ENCODE measurements at regions of chr2 and their contacts with region 1.

Region 1: DNA sequence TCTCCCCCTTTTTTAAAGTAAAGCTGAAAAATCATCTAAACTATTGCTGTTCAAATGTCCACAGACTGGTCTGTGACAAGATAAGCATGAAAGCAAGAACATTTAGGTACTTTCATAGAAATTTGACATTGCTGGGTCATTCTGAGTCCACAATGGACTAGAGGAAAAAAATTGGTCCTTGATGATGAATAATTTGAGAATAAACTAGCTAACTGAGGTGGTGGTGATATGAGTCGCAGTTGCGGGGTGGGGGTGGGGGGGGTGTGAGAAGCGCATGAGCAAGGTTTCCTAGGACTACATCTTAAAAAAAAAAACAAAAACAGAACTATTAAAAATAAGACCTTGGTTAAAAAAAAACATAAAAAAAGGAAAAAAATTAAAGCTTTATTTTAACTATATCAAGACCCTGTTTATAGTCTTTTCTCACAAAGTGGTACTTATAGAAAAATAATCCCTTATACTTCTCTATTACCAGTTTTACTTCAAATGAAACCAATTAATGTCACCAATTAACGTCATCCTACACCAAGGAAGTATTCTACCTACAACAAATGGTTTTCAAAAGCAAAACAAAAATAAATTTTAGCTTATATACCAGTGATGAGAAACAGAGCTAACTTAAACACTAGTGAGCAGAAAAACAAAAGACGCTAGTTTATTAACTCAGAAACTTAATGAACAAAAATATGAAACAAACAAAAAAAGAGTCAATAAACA is 88.1 kb downstream of the ASXL2 start:
- DNase-seq: no peak
- H3K4me3 ChIP-seq: no peak overlapping the region
- H3K27ac ChIP-seq: no peak overlapping the region
- H3K4me1 ChIP-seq: no peaks in the 10 kb centered on the region
- H3K27me3 ChIP-seq: no peaks in the 10 kb centered on the region
- CTCF ChIP-seq: no peak

Region 2: DNA sequence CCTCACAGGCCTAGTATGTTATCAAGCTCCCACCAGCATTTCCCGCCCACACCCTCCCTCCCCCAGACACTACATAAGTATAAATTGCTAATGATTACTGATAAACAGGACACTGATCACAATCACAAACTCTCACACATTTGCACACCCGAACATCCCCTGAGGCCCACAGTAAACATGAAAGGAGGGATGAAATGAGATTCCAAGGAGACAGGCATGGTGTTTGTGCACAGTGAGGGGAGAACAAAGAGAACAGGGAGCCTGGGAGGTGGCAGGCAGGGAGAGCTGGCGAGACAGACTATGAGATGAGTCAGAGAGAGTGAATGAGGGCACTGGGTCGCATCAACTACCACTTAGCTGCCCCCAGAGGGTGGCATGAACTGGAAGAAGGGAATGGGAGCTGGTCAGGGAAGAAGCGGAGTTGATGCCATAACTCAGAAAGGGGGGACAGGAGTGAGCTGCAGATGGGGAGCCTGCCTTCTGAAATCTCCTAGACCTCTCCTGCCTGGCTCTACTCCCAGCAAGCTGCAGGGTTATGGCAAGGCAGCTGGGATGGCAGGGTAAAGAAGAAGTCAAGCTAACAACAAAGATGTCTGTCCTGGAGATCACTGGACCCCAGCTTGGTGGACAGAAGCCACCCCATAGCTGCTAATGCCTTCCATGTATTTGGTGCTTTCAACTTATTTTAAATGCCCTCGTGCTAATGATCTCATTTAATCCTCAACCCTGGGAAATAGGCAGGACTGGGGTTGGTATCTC is 186.9 kb after region 1 on chr2:
- CTCF ChIA-PET with region 1: interaction called, 14 read pairs
- dilution Hi-C with region 1: no loop called
- in situ Hi-C with region 1: no loop called
- intact Hi-C with region 1: no loop called
- DNase-seq: peak; percentile 72
- H3K4me3 ChIP-seq: no peak overlapping the region
- H3K27ac ChIP-seq: peak overlapping the region; percentile 92
- H3K4me1 ChIP-seq: peaks cover 42% of the 10 kb centered on the region
- H3K27me3 ChIP-seq: no peaks in the 10 kb centered on the region
- CTCF ChIP-seq: no peak

Measured in mammary epithelial cell (primary cell).